Calu3 (cell line): ENCODE measurements at regions of chr22 and their contacts with region 1.

Region 1: GRCh38 chr22:49930739-49931412 is 12.4 kb downstream of the CRELD2 start:
- DNase-seq: peak; percentile 91
- H3K4me3 Mint-ChIP-seq: no peak overlapping the region
- H3K27ac Mint-ChIP-seq: peak overlapping the region; percentile 43
- H3K4me1 Mint-ChIP-seq: peaks cover 27% of the 10 kb centered on the region
- H3K27me3 Mint-ChIP-seq: no peaks in the 10 kb centered on the region
- CTCF ChIP-seq: peak; percentile 81

Region 2: GRCh38 chr22:49951000-49951677 is 20.3 kb after region 1 on chr22:
- CTCF ChIA-PET with region 1: interaction called, 30 read pairs
- intact Hi-C with region 1: no loop called
- DNase-seq: peak; percentile 98
- H3K4me3 Mint-ChIP-seq: peak overlapping the region; percentile 58
- H3K27ac Mint-ChIP-seq: peak overlapping the region; percentile 93
- H3K4me1 Mint-ChIP-seq: peaks cover 9% of the 10 kb centered on the region
- H3K27me3 Mint-ChIP-seq: no peaks in the 10 kb centered on the region
- CTCF ChIP-seq: no peak

Region 3: GRCh38 chr22:49962012-49962750 is 31.3 kb after region 1 on chr22:
- CTCF ChIA-PET with region 1: interaction called, 16 read pairs
- intact Hi-C with region 1: loop called (anchors 1 kb)
- DNase-seq: peak; percentile 87
- H3K4me3 Mint-ChIP-seq: peak overlapping the region; percentile 93
- H3K27ac Mint-ChIP-seq: peak overlapping the region; percentile 90
- H3K4me1 Mint-ChIP-seq: peaks cover 36% of the 10 kb centered on the region
- H3K27me3 Mint-ChIP-seq: no peaks in the 10 kb centered on the region
- CTCF ChIP-seq: no peak

Region 4: GRCh38 chr22:49970528-49971231 is 39.8 kb after region 1 on chr22:
- CTCF ChIA-PET with region 1: interaction called, 16 read pairs
- intact Hi-C with region 1: no loop called
- DNase-seq: peak; percentile 98
- H3K4me3 Mint-ChIP-seq: peak overlapping the region; percentile 72
- H3K27ac Mint-ChIP-seq: peak overlapping the region; percentile 87
- H3K4me1 Mint-ChIP-seq: peaks cover 17% of the 10 kb centered on the region
- H3K27me3 Mint-ChIP-seq: no peaks in the 10 kb centered on the region
- CTCF ChIP-seq: no peak

Region 5: DNA sequence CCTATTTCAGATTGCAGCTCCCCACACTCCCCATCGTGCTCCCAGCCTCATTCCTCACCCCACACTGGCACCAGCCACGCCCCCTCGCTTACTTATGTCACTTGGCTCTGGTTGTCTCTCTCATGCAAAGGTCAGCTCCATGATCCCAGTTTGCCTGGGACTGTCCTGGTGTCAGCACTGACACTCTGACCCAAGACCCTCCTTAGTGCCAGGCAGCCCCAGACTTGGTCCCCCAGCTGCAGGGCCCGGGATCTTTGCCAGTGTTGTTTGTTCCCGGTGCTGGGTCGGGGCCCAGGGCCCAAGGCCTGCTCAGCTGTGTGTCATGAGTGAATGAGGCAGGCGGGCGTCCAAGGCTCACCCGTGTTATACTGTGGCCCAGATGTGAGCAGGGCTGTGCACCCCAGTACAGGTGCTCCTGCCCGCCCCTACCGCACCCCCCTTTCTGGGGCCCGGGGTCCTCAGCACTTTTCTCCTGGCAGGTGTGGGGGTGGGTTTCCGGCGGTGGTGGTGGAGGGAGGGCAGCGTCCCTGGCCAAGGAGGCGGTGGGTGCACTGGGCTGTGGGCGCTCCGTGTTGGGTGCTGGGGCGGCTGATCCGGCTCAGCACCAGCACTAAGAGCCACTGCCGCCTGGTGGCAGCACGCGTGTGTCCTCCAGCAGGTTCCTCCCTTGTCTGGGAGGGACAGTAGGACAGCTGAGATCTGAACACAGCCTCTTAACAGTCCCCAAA is 62.2 kb after region 1 on chr22:
- CTCF ChIA-PET with region 1: interaction called, 11 read pairs
- intact Hi-C with region 1: loop called (anchors 5 kb)
- DNase-seq: peak; percentile 78
- H3K4me3 Mint-ChIP-seq: no peak overlapping the region
- H3K27ac Mint-ChIP-seq: no peak overlapping the region
- H3K4me1 Mint-ChIP-seq: peaks cover 6% of the 10 kb centered on the region
- H3K27me3 Mint-ChIP-seq: no peaks in the 10 kb centered on the region
- CTCF ChIP-seq: peak; percentile 71

Region 6: GRCh38 chr22:50012716-50013181 is 81.9 kb after region 1 on chr22 and contains the start of gene IL17REL:
- CTCF ChIA-PET with region 1: interaction called, 4 read pairs
- intact Hi-C with region 1: loop called (anchors 5 kb)
- DNase-seq: peak; percentile 36
- H3K4me3 Mint-ChIP-seq: peak within 1 kb of the TSS; percentile 42
- H3K27ac Mint-ChIP-seq: no peak within 1 kb of the TSS
- H3K4me1 Mint-ChIP-seq: peaks cover 19% of the 10 kb centered on the region
- H3K27me3 Mint-ChIP-seq: peaks cover 32% of the 10 kb centered on the region
- CTCF ChIP-seq: no peak
- total RNA-seq, gene IL17REL: not detected in 2 replicates

Region 7: DNA sequence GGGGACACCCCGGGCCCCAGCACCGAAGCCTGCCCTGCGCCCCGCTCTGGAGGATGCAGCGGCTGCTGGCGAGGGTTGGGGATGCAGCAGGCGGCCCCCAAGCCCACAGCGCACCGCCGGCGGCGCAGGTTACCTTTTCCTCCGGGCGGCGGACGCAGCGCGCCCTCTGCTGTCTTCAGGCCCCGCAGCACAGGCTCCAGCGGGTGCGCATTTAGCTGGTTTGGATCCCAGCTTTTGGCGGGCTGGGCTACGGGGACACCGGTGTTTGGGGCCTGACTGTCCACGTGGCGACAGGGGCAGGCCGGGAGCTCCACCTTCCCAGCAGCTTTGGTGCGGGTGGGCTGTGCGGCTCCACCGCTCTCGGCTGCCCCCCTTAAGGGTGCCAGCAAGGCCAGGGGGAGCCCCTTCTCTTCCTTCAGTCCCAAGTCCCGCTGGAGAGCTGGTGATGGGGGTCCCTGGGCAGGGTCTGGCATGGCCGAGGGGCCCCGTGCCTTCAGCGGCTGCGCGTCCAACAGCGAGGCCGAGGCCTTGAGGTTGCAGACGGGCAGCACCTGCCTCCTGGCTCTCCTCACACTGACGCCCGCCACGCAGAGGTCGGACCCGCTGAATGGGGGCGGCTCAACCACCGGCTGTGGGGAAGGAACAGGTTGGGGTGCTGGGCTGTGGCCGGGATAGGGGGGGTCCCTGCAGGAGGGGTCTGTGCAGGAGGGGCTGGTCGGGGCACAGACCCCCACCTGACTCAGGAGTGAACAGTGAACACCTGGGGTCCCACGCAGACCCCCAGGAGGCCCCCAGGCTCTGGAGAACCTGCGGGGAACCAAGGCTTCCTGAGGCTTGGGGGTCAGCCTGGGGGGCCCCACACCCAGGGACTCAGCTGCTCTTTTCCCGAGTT is 99.7 kb after region 1 on chr22:
- CTCF ChIA-PET with region 1: interaction called, 46 read pairs
- intact Hi-C with region 1: loop called (anchors 1 kb)
- DNase-seq: peak; percentile 90
- H3K4me3 Mint-ChIP-seq: peak overlapping the region; percentile 57
- H3K27ac Mint-ChIP-seq: no peak overlapping the region
- H3K4me1 Mint-ChIP-seq: peaks cover 20% of the 10 kb centered on the region
- H3K27me3 Mint-ChIP-seq: peaks cover 40% of the 10 kb centered on the region
- CTCF ChIP-seq: peak; percentile 93

Region 8: DNA sequence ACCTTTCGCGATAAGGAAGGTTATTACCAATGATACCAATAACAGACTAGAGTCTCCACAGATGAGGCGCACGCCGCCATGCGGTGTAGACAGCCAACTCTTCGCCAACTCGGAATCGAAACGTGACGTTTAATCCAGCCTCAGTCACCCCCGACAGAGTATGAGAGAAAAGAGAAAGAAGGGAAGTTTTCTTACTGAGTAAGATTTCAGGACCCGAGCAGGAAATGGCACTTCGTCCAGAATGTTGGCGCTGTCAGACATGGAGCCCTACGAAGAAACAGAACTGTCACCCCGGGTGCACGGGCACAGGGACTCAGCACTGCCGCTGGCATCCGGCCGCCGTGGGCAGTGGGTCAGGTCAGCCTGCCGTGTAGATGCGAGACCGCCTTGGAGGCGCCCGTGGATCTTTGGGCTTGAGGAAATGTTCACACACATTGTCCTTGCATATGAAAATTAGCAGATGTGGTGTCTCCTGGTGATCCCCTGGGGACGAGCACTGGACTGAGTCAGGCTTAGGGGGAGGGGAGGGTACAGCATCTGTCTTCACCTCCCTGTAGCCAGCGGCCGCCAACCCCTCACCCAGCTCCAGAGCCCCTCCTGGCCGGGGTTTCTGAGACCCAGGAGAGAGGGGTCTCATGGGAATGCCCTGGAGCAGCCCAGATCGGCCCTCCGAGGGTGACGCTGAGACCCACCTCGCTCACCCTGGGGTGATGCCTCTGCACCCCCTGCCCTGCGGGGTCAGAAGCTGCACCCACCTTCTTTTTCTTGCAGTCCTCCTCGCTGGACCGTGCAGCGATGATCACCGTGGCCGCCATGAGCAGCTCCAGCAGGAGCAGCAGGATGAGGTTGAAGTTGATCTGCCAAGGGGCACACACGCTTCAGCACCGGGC is 146.0 kb after region 1 on chr22:
- CTCF ChIA-PET with region 1: no interaction called
- intact Hi-C with region 1: no loop called
- DNase-seq: no peak
- H3K4me3 Mint-ChIP-seq: no peak overlapping the region
- H3K27ac Mint-ChIP-seq: no peak overlapping the region
- H3K4me1 Mint-ChIP-seq: no peaks in the 10 kb centered on the region
- H3K27me3 Mint-ChIP-seq: peaks cover 51% of the 10 kb centered on the region
- CTCF ChIP-seq: no peak